ENCODE measurements at regions of chr1 and their contacts with region 1.

Region 1: DNA sequence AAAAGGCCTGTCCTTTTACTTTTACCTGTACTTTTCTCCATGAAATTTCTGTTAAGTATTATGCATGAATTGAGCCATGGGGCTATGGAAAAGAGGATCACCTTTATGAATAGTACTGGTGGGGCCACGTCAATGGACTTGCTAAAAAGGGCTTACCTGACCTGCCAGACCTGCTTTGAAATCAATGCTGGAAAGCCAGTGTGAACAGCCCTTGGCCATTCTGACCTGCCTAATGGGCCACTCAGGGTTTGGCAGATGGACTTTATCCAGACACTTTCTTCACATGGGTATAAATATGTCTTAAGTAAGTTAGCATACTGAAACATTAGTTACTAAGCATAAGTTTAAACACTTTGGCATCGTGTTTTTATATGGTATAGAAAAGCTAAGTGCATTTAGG is 8.3 kb upstream of the GUK1 start:
- DNase-seq: no peak
- H3K4me3 ChIP-seq: no peak overlapping the region
- H3K4me3 Mint-ChIP-seq: no peak overlapping the region
- H3K27ac ChIP-seq: no peak overlapping the region
- H3K27ac Mint-ChIP-seq: no peak overlapping the region
- H3K4me1 ChIP-seq: no peaks in the 10 kb centered on the region
- H3K4me1 Mint-ChIP-seq: peaks cover 13 to 19% (median 14%) of the 10 kb centered on the region in 3 donors
- H3K27me3 ChIP-seq: no peaks in the 10 kb centered on the region
- H3K27me3 Mint-ChIP-seq: peaks cover 8 to 9% of the 10 kb centered on the region in 2 donors

Region 2: GRCh38 chr1:228109073-228109961 is 22.4 kb before region 1 on chr1 and contains the start of gene MRPL55:
- CTCF ChIA-PET with region 1: interaction called, 7 read pairs
- POLR2A ChIA-PET with region 1: interaction called, 12 read pairs
- DNase-seq: peak; percentile 97 to 99 (median 98)
- H3K4me3 ChIP-seq: peak within 1 kb of the TSS; percentile 92
- H3K4me3 Mint-ChIP-seq: peak within 1 kb of the TSS; percentile 88 to 97 (median 93)
- H3K27ac ChIP-seq: peak within 1 kb of the TSS; percentile 93
- H3K27ac Mint-ChIP-seq: peak within 1 kb of the TSS; percentile 89 to 98 (median 94)
- H3K4me1 ChIP-seq: peaks cover 21% of the 10 kb centered on the region
- H3K4me1 Mint-ChIP-seq: peaks cover 21 to 29% (median 21%) of the 10 kb centered on the region in 3 donors
- H3K27me3 ChIP-seq: no peaks in the 10 kb centered on the region
- H3K27me3 Mint-ChIP-seq: peaks cover 0 to 2% of the 10 kb centered on the region in 2 donors
- total RNA-seq, gene MRPL55: 70.0 to 71.8 TPM

Region 3: DNA sequence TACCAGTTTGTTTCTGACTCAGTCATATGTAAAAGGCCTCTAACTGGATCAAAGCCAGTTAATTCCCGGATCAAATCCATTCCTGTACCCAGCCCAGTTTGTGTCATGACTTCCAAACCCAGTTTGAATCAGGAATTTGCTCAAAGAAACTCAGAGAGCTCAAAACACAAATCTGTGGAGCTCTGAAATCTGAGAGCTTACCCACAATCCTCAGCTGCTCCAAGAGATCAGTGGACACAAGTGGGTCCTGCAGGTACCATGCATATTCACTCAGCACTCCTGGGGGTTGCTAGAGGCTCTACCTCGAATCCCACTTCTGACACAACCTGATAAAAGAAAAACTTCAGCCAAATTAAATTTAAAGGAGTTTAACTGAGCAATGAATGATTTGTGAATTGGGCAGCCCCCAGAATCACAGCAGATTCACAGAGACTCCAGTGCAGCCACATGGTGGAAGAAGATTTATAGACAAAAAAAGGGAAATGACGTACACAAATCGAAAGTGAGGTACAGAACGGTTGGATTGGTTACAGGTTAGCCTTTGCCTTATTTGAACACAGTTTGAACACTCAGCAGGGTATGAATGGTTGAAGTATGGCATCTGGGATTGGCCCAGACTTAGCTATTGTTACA is 10.8 kb before region 1 on chr1:
- CTCF ChIA-PET with region 1: interaction called, 13 read pairs
- POLR2A ChIA-PET with region 1: interaction called, 3 read pairs
- DNase-seq: no peak
- H3K4me3 ChIP-seq: no peak overlapping the region
- H3K4me3 Mint-ChIP-seq: no peak overlapping the region
- H3K27ac ChIP-seq: no peak overlapping the region
- H3K27ac Mint-ChIP-seq: no peak overlapping the region
- H3K4me1 ChIP-seq: no peaks in the 10 kb centered on the region
- H3K4me1 Mint-ChIP-seq: no peaks in the 10 kb centered on the region
- H3K27me3 ChIP-seq: no peaks in the 10 kb centered on the region
- H3K27me3 Mint-ChIP-seq: peaks cover 0 to 1% of the 10 kb centered on the region in 2 donors

Region 4: DNA sequence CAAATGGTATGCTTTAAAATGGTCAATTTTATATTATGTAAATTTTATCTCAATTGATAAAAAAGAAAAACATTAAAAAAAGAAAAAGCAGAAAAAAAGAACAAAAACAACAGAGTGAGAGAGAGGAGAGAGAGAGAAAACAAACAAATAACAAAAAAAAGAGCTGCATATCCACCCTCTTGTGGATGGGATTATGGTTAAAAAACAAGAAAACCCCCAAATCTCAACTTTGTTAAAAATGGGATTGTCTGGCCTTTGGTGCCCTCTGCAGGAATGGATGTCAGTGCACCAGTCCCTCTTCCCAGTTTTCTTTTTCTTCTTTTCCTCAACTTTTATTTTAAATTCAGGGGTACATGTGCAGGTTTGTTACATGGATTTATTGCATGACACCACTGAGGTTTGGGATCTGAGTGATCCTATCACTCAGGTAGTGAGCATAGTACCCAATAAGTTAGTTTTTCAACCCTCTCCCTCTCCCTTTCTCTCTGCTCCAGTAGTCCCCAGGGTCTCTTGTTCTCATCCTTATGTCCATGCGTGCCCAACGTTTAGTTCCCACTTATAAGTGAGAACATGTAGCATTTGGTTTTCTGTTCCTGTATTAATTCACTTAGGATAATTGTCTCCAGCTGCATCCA is 383.6 kb after region 1 on chr1:
- CTCF ChIA-PET with region 1: interaction called, 12 read pairs
- POLR2A ChIA-PET with region 1: no interaction called
- DNase-seq: peak in 3 of 5 donors; percentile 25 to 50 (median 44)
- H3K4me3 ChIP-seq: no peak overlapping the region
- H3K4me3 Mint-ChIP-seq: no peak overlapping the region
- H3K27ac ChIP-seq: no peak overlapping the region
- H3K27ac Mint-ChIP-seq: peak overlapping the region in 1 of 8 donors; percentile 6
- H3K4me1 ChIP-seq: peaks cover 18% of the 10 kb centered on the region
- H3K4me1 Mint-ChIP-seq: peaks cover 6 to 13% (median 7%) of the 10 kb centered on the region in 3 donors
- H3K27me3 ChIP-seq: no peaks in the 10 kb centered on the region
- H3K27me3 Mint-ChIP-seq: peaks cover 0 to 4% of the 10 kb centered on the region in 2 donors